GM10248 (cell line): ENCODE measurements at regions of chr12 and their contacts with region 1.

Region 1: GRCh38 chr12:5745265-5745888 is 199.7 kb downstream of the ANO2 start:
- DNase-seq: peak; percentile 58
- CTCF ChIP-seq: peak; percentile 83

Region 2: GRCh38 chr12:5733136-5733755 is 12.1 kb before region 1 on chr12:
- CTCF ChIA-PET with region 1: interaction called, 47 read pairs
- POLR2A ChIA-PET with region 1: no interaction called
- DNase-seq: no peak
- CTCF ChIP-seq: no peak

Region 3: GRCh38 chr12:5756338-5756842 is 11.0 kb after region 1 on chr12:
- CTCF ChIA-PET with region 1: interaction called, 28 read pairs
- POLR2A ChIA-PET with region 1: no interaction called
- DNase-seq: no peak
- CTCF ChIP-seq: no peak

Region 4: GRCh38 chr12:5765881-5766280 is 20.5 kb after region 1 on chr12:
- CTCF ChIA-PET with region 1: interaction called, 18 read pairs
- POLR2A ChIA-PET with region 1: no interaction called
- DNase-seq: no peak
- CTCF ChIP-seq: no peak

Region 5: DNA sequence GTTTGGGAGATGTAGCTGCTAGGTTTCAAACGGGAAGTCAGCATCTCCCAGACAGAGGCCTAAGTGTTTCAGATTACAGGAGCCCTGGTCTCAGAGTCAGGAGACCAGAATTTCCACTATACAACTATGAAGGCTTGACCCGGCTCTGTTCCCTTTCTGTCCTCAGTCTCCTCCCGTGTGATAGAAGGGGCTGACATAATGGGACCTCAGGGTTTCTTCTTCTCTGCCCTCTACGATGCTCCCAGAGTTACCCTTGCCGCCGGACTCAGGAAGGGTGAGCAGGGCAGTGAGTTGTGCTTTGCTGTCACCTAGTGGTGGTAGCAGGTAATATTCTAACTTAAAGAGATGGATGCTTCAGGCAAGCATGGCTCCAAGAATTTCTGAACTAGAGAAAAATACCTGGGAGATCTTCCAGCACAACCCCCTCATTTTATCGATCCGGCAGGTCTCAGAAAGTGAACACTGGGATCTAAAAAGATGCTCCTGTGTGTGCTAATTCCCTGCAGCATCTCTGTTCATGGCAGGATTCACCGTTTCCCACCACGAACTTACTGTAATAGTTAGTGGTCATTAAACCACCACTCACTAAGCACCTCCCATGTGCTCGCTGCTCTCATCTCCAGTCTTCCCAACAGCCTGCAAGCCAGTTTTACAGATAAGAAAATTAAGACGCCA is 294.7 kb after region 1 on chr12:
- CTCF ChIA-PET with region 1: interaction called, 10 read pairs
- POLR2A ChIA-PET with region 1: no interaction called
- DNase-seq: peak; percentile 71
- CTCF ChIP-seq: peak; percentile 90